ENCODE measurements at regions of chr4 and their contacts with region 1.

Region 1: GRCh38 chr4:39638354-39639240 is at the start of gene SMIM14:
- DNase-seq: no peak
- ATAC-seq: peak; percentile 82
- H3K4me3 ChIP-seq: peak within 1 kb of the TSS; percentile 75
- H3K27ac ChIP-seq: peak within 1 kb of the TSS; percentile 43
- H3K4me1 ChIP-seq: peaks cover 5% of the 10 kb centered on the region; the same call in 1 of the 2 replicates
- H3K27me3 ChIP-seq: no peaks in the 10 kb centered on the region
- CTCF ChIP-seq: no peak
- EP300 ChIP-seq: peak; percentile 34 to 50; a peak in 1 of 4 replicates
- POLR2A ChIP-seq: peak; percentile 88
- RAD21 ChIP-seq: no peak; the same call in 1 of the 2 replicates
- polyA plus RNA-seq, gene SMIM14: 585 to 671 TPM

Region 2: GRCh38 chr4:39353478-39354253 is 284.9 kb before region 1 on chr4:
- CTCF ChIA-PET with region 1: no interaction called
- POLR2A ChIA-PET with region 1: interaction called, 4 read pairs
- RAD21 ChIA-PET with region 1: no interaction called
- SMC1A ChIA-PET with region 1: no interaction called
- in situ Hi-C with region 1: no loop called
- intact Hi-C with region 1: loop called (anchors 5 kb)
- DNase-seq: peak; percentile 85
- ATAC-seq: peak; percentile 85
- H3K4me3 ChIP-seq: peak overlapping the region; percentile 48; the same call in 1 of the 2 replicates
- H3K27ac ChIP-seq: peak overlapping the region; percentile 70
- H3K4me1 ChIP-seq: peaks cover 42% of the 10 kb centered on the region
- H3K27me3 ChIP-seq: no peaks in the 10 kb centered on the region
- CTCF ChIP-seq: no peak
- EP300 ChIP-seq: peak; percentile 75 to 77; a peak in 3 of 4 replicates
- POLR2A ChIP-seq: no peak
- RAD21 ChIP-seq: no peak

Region 3: GRCh38 chr4:39568815-39569608 is 69.6 kb before region 1 on chr4:
- CTCF ChIA-PET with region 1: no interaction called
- POLR2A ChIA-PET with region 1: interaction called, 4 read pairs
- RAD21 ChIA-PET with region 1: interaction called, 4 read pairs
- SMC1A ChIA-PET with region 1: interaction called, 19 read pairs
- in situ Hi-C with region 1: no loop called
- intact Hi-C with region 1: no loop called
- DNase-seq: peak; percentile 31
- ATAC-seq: peak; percentile 88
- H3K4me3 ChIP-seq: peak overlapping the region; percentile 8; the same call in 1 of the 2 replicates
- H3K27ac ChIP-seq: peak overlapping the region; percentile 82
- H3K4me1 ChIP-seq: peaks cover 7% of the 10 kb centered on the region
- H3K27me3 ChIP-seq: no peaks in the 10 kb centered on the region
- CTCF ChIP-seq: no peak
- EP300 ChIP-seq: no peak
- POLR2A ChIP-seq: no peak
- RAD21 ChIP-seq: no peak

Region 4: GRCh38 chr4:39621582-39621981 is 17.0 kb before region 1 on chr4:
- CTCF ChIA-PET with region 1: interaction called, 8 read pairs
- POLR2A ChIA-PET with region 1: interaction called, 129 read pairs
- RAD21 ChIA-PET with region 1: interaction called, 217 read pairs
- SMC1A ChIA-PET with region 1: interaction called, 254 read pairs
- in situ Hi-C with region 1: no loop called
- intact Hi-C with region 1: no loop called
- DNase-seq: no peak
- ATAC-seq: no peak
- H3K4me3 ChIP-seq: no peak overlapping the region
- H3K27ac ChIP-seq: no peak overlapping the region
- H3K4me1 ChIP-seq: peaks cover 38% of the 10 kb centered on the region
- H3K27me3 ChIP-seq: no peaks in the 10 kb centered on the region
- CTCF ChIP-seq: no peak
- EP300 ChIP-seq: no peak
- POLR2A ChIP-seq: no peak
- RAD21 ChIP-seq: no peak

Region 5: GRCh38 chr4:39977489-39978377 is 339.1 kb after region 1 on chr4 and contains the start of gene PDS5A:
- CTCF ChIA-PET with region 1: interaction called, 3 read pairs
- POLR2A ChIA-PET with region 1: no interaction called
- RAD21 ChIA-PET with region 1: interaction called, 6 read pairs
- SMC1A ChIA-PET with region 1: interaction called, 3 read pairs
- in situ Hi-C with region 1: no loop called
- intact Hi-C with region 1: loop called (anchors 5 kb)
- DNase-seq: peak; percentile 56
- ATAC-seq: peak; percentile 82
- H3K4me3 ChIP-seq: peak within 1 kb of the TSS; percentile 93
- H3K27ac ChIP-seq: peak within 1 kb of the TSS; percentile 95
- H3K4me1 ChIP-seq: peaks cover 3% of the 10 kb centered on the region
- H3K27me3 ChIP-seq: no peaks in the 10 kb centered on the region
- CTCF ChIP-seq: peak; percentile 84 to 99 (median 94)
- EP300 ChIP-seq: no peak
- POLR2A ChIP-seq: peak; percentile 79
- RAD21 ChIP-seq: peak; percentile 69
- polyA plus RNA-seq, gene PDS5A: 13.7 to 14.1 TPM

Region 6: GRCh38 chr4:40587823-40588222 is 949.2 kb after region 1 on chr4:
- CTCF ChIA-PET with region 1: no interaction called
- POLR2A ChIA-PET with region 1: no interaction called
- RAD21 ChIA-PET with region 1: no interaction called
- SMC1A ChIA-PET with region 1: no interaction called
- in situ Hi-C with region 1: no loop called
- intact Hi-C with region 1: no loop called
- DNase-seq: no peak
- ATAC-seq: no peak; the same call in 2 of the 3 replicates
- H3K4me3 ChIP-seq: no peak overlapping the region
- H3K27ac ChIP-seq: no peak overlapping the region
- H3K4me1 ChIP-seq: no peaks in the 10 kb centered on the region; the same call in 1 of the 2 replicates
- H3K27me3 ChIP-seq: no peaks in the 10 kb centered on the region
- CTCF ChIP-seq: no peak
- EP300 ChIP-seq: no peak
- POLR2A ChIP-seq: no peak
- RAD21 ChIP-seq: no peak